ENCODE measurements at regions of chr20 and their contacts with region 1.

Region 1: GRCh38 chr20:62900052-62900691 is 26.1 kb downstream of the DIDO1 start:
- DNase-seq: peak; percentile 66 to 83 (median 73)
- ATAC-seq: peak; percentile 84 to 92 (median 90)
- H3K4me3 ChIP-seq: no peak overlapping the region
- H3K27ac ChIP-seq: no peak overlapping the region
- H3K4me1 ChIP-seq: peaks cover 6 to 28% (median 16%) of the 10 kb centered on the region in 12 donors
- H3K27me3 ChIP-seq: no peaks in the 10 kb centered on the region
- CTCF ChIP-seq: peak; percentile 76 to 93 (median 86)
- POLR2A ChIP-seq: no peak

Region 2: GRCh38 chr20:62861726-62862336 is 38.3 kb before region 1 on chr20 and contains the start of gene TCFL5:
- intact Hi-C with region 1: loop called in 1 of 10 experiments (anchors 5 kb)
- DNase-seq: peak; percentile 89 to 97 (median 90)
- ATAC-seq: peak; percentile 84 to 98 (median 98)
- H3K4me3 ChIP-seq: peak within 1 kb of the TSS in 11 of 12 donors; percentile 14 to 66 (median 50)
- H3K27ac ChIP-seq: peak within 1 kb of the TSS in 6 of 12 donors; percentile 32 to 72 (median 42)
- H3K4me1 ChIP-seq: peaks cover 0 to 21% (median 12%) of the 10 kb centered on the region in 12 donors
- H3K27me3 ChIP-seq: no peaks in the 10 kb centered on the region
- CTCF ChIP-seq: no peak
- POLR2A ChIP-seq: peak in 1 of 2 donors; percentile 20
- total RNA-seq, gene TCFL5: 4.5 to 8.2 (median 6.1) TPM

Region 3: GRCh38 chr20:62943396-62943795 is 43.2 kb after region 1 on chr20:
- intact Hi-C with region 1: loop called in 1 of 10 experiments (anchors 5 kb)
- DNase-seq: peak in 1 of 5 donors; percentile 20
- ATAC-seq: no peak
- H3K4me3 ChIP-seq: no peak overlapping the region
- H3K27ac ChIP-seq: no peak overlapping the region
- H3K4me1 ChIP-seq: peaks cover 5 to 67% (median 39%) of the 10 kb centered on the region in 12 donors
- H3K27me3 ChIP-seq: no peaks in the 10 kb centered on the region
- CTCF ChIP-seq: no peak
- POLR2A ChIP-seq: no peak